ENCODE measurements at regions of chr9 and their contacts with region 1.

Region 1: GRCh38 chr9:33623658-33624586 is 99.9 kb downstream of the ANKRD18B start:
- DNase-seq: peak; percentile 26 to 86 (median 56)
- ATAC-seq: peak; percentile 88 to 94 (median 91)
- H3K4me3 ChIP-seq: no peak overlapping the region
- H3K4me3 Mint-ChIP-seq: no peak overlapping the region
- H3K27ac ChIP-seq: no peak overlapping the region
- H3K27ac Mint-ChIP-seq: no peak overlapping the region
- H3K4me1 ChIP-seq: peaks cover 0 to 6% of the 10 kb centered on the region in 2 experiments
- H3K4me1 Mint-ChIP-seq: peaks cover 4 to 7% (median 6%) of the 10 kb centered on the region in 3 donors
- H3K27me3 ChIP-seq: peaks cover 0 to 20% of the 10 kb centered on the region in 2 experiments
- H3K27me3 Mint-ChIP-seq: peaks cover 20 to 45% of the 10 kb centered on the region in 2 donors

Region 2: GRCh38 chr9:33687779-33688178 is 63.9 kb after region 1 on chr9:
- CTCF ChIA-PET with region 1: no interaction called
- POLR2A ChIA-PET with region 1: no interaction called
- DNase-seq: no peak
- ATAC-seq: no peak
- H3K4me3 ChIP-seq: no peak overlapping the region
- H3K4me3 Mint-ChIP-seq: no peak overlapping the region
- H3K27ac ChIP-seq: no peak overlapping the region
- H3K27ac Mint-ChIP-seq: no peak overlapping the region
- H3K4me1 ChIP-seq: no peaks in the 10 kb centered on the region
- H3K4me1 Mint-ChIP-seq: peaks cover 0 to 7% (median 0%) of the 10 kb centered on the region in 3 donors
- H3K27me3 ChIP-seq: no peaks in the 10 kb centered on the region
- H3K27me3 Mint-ChIP-seq: peaks cover 27 to 50% of the 10 kb centered on the region in 2 donors

Region 3: DNA sequence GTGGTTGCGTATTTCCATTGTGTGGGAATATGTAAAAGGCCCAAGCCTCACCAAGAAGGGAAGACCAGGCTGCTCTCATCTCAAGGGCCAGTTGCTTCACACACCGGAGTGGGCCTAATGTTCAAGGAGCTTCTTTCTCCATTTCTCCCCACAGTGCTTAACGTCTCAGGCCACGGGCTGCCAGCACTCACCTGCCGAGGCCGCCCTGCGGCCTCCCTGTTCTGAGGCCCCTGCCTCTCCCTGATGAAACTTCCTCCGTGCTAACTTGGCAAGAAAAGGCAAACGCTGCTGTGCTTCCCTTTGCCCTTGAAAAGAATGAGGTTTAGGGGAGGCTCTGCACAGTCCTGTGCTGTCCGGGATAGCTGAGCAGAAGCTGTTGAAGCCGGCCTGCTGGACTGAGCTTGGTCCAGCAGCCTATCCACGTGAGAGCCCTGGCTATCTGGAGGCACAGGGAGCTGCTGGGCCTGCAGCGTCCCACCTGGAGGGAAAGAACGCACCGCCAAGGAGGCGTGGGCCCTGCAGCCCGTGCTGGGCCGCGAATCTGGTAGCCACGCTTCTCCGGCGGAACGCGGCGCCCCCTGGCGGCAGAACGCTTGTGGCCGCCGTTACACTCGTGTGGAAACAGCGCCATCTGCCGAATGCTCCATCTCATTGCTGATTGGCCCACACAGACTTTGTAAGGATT is 97.9 kb after region 1 on chr9:
- CTCF ChIA-PET with region 1: interaction called, 40 to 84 read pairs
- POLR2A ChIA-PET with region 1: no interaction called
- DNase-seq: peak; percentile 60 to 93 (median 83)
- ATAC-seq: peak; percentile 71 to 82 (median 81)
- H3K4me3 ChIP-seq: no peak overlapping the region
- H3K4me3 Mint-ChIP-seq: no peak overlapping the region
- H3K27ac ChIP-seq: no peak overlapping the region
- H3K27ac Mint-ChIP-seq: no peak overlapping the region
- H3K4me1 ChIP-seq: peaks cover 0 to 11% of the 10 kb centered on the region in 2 experiments
- H3K4me1 Mint-ChIP-seq: peaks cover 0 to 9% (median 3%) of the 10 kb centered on the region in 3 donors
- H3K27me3 ChIP-seq: peaks cover 2 to 17% of the 10 kb centered on the region in 2 experiments
- H3K27me3 Mint-ChIP-seq: peaks cover 15 to 16% of the 10 kb centered on the region in 2 donors

Region 4: DNA sequence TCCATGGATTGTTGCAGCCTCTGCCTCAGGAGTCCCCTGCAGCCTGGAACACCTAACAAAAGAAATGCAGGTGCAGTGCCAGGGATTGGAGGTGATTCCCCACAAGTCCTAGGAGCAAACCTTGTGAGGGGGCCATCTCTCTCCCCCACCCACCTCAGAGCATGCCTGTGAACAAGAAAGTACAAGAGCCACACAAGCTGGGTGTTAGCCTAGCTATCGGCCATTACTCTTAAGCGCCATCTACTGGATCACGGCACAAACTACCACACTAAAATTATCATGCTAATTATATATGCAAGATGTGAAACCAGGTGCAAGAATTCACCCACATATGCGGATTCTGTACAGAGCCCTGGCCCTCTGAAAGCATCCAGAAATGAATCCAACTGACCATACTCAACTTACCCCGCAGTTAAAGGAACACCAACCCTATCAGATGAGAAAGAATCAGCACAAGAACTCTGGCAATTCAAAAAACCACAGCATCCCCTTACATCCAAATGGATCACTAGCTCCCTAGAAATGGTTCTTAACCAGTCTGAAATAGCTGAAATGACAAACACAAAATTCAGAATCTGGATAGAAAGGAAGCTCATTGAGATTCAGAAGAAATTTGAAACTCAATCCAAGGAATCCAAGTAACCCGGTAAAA is 154.9 kb after region 1 on chr9:
- CTCF ChIA-PET with region 1: interaction called, 3 to 22 read pairs
- POLR2A ChIA-PET with region 1: no interaction called
- DNase-seq: peak in 34 of 35 experiments; percentile 1 to 77 (median 30)
- ATAC-seq: peak; percentile 69 to 83 (median 78)
- H3K4me3 ChIP-seq: no peak overlapping the region
- H3K4me3 Mint-ChIP-seq: no peak overlapping the region
- H3K27ac ChIP-seq: no peak overlapping the region
- H3K27ac Mint-ChIP-seq: no peak overlapping the region
- H3K4me1 ChIP-seq: no peaks in the 10 kb centered on the region
- H3K4me1 Mint-ChIP-seq: peaks cover 0 to 3% (median 2%) of the 10 kb centered on the region in 3 donors
- H3K27me3 ChIP-seq: peaks cover 0 to 4% of the 10 kb centered on the region in 2 experiments
- H3K27me3 Mint-ChIP-seq: peaks cover 5 to 10% of the 10 kb centered on the region in 2 donors